ENCODE measurements at regions of chr2 and their contacts with region 1.

Region 1: DNA sequence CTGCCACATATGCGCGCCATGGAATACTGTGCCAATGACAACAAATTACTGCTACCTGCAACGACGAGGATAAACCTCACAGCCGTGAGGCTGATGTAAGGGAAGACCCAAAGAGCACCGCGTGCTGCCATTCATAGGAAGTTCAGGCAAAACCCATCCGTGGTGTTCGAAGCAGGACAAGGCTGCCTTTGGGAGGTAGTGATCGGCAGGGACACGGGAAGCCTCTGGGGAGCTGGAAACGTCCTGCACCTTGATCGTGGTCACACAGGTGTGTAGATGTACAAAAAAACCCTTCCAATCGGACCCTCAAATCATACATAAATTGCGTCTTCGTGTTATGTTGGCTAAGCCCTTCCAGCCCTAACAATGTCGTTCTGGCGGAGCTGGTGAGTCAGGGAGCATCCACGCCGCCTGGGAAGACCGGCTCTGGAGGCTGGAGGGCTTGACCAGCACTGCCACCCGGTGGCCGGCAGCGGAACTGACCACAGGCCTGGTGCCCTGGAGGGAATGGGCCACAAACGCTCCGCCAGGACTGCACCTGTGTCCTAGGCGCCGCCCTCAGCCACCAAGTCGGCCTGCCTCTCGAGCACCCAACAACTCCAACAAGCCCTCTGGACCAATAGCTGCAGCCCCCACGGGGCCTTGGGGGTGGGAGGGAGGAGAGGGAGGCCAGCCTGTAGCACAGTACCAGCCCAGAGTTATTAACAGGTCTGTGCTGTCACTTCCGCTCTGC is 4.1 kb upstream of the NEURL3 start:
- DNase-seq: peak; percentile 73
- ATAC-seq: peak; percentile 67
- H3K4me3 Mint-ChIP-seq: peak overlapping the region; percentile 65
- H3K27ac Mint-ChIP-seq: no peak overlapping the region
- H3K4me1 Mint-ChIP-seq: peaks cover 25% of the 10 kb centered on the region
- H3K27me3 Mint-ChIP-seq: peaks cover 7% of the 10 kb centered on the region
- CTCF ChIP-seq: peak; percentile 23

Region 2: DNA sequence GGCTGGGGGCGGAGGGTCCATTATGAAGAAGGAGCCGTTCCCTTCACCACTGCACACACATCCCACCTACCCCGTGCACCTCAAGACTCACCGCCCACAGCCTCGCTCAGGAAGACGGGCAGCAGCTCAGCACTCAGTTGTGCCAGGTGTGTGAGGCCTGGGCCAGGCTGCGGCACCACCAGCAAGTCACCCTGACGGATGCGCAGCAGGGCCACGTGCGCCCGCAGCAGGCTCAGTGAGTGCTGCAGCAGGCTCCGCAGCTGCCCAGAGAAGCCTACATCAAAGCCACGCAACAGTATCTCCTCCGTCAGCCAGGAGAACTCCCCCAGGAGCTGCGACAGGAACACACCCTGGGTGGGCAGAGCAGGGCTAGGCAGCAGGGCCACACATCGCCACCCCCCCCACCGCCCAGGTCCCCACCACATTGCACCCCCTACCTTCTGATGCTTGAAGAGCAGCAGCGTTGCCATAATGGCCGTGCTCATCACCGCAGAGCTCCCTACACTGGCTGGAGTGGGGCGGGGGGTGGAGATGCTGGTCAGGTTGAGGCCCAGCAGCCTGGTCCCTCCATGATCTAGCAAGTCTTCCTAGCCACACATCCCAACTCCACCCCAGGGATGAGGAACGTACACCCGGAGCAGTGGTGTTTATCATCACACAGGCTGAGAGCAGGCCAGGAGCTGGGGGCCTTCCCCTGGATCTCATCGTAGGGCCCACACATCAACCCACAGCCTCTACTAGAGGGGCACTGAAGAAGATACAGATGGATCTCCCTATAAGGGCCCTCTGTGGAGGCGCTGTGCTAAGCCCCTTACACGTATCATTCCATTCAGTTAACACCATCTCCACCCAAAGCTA is 484.7 kb before region 1 on chr2:
- CTCF ChIA-PET with region 1: interaction called, 5 read pairs
- POLR2A ChIA-PET with region 1: no interaction called
- intact Hi-C with region 1: loop called (anchors 10 kb)
- DNase-seq: no peak
- ATAC-seq: no peak
- H3K4me3 Mint-ChIP-seq: no peak overlapping the region
- H3K27ac Mint-ChIP-seq: no peak overlapping the region
- H3K4me1 Mint-ChIP-seq: no peaks in the 10 kb centered on the region
- H3K27me3 Mint-ChIP-seq: no peaks in the 10 kb centered on the region
- CTCF ChIP-seq: no peak

Region 3: GRCh38 chr2:96336104-96336775 is 173.0 kb before region 1 on chr2:
- CTCF ChIA-PET with region 1: no interaction called
- POLR2A ChIA-PET with region 1: interaction called, 3 read pairs
- intact Hi-C with region 1: loop called (anchors 1 kb)
- DNase-seq: no peak
- ATAC-seq: no peak
- H3K4me3 Mint-ChIP-seq: peak overlapping the region; percentile 87
- H3K27ac Mint-ChIP-seq: peak overlapping the region; percentile 91
- H3K4me1 Mint-ChIP-seq: peaks cover 36% of the 10 kb centered on the region
- H3K27me3 Mint-ChIP-seq: no peaks in the 10 kb centered on the region
- CTCF ChIP-seq: no peak

Region 4: GRCh38 chr2:96407041-96407918 is 102.0 kb before region 1 on chr2:
- CTCF ChIA-PET with region 1: interaction called, 78 read pairs
- POLR2A ChIA-PET with region 1: interaction called, 7 read pairs
- intact Hi-C with region 1: loop called (anchors 1 kb)
- DNase-seq: peak; percentile 48
- ATAC-seq: peak; percentile 85
- H3K4me3 Mint-ChIP-seq: no peak overlapping the region
- H3K27ac Mint-ChIP-seq: no peak overlapping the region
- H3K4me1 Mint-ChIP-seq: peaks cover 7% of the 10 kb centered on the region
- H3K27me3 Mint-ChIP-seq: no peaks in the 10 kb centered on the region
- CTCF ChIP-seq: no peak

Region 5: DNA sequence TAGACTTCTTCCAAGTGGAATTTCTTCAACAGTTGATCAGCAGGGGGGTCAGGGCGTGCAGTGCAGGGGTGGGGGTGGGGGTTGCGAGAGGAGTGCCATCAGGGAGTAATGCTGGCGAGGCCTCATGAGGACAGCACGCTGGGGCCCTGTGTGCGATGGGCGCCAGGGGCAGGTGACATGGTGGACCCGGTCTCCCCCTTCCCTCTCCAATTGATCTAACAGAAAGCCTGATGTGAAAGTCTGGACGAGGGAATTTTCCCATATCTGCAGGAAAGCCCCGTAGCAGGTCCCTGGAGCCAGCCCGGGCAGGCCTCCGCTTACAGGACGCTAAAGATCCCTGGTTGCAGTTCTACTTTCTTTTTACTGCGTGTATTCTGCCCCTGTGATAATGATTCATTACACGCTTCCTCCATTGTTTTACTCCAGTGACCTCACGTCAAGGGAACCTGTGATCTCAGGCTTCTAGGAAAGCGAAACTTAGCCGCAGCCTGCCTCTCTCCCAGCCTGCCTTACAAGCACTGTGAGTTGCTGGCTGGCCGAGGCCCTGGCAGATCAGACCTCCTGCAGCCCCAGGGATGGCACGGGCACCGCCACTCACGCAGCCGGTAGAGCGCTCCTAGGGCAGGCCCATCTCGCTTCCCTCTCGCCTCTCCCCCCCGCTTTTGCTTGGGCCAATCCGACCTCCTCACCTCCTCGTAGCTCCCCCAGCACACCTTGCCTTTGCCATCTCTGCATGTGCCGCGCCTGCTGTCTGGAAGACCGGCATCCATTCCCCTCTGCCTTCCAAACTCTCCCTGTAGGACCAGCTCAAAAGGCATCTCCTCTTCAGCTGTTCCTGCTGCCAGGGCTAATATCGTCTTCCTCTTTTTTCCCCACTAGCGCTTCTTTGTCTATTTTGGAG is 23.3 kb before region 1 on chr2:
- CTCF ChIA-PET with region 1: interaction called, 5 read pairs
- POLR2A ChIA-PET with region 1: no interaction called
- intact Hi-C with region 1: loop called (anchors 1 kb)
- DNase-seq: peak; percentile 54
- ATAC-seq: peak; percentile 91
- H3K4me3 Mint-ChIP-seq: peak overlapping the region; percentile 91
- H3K27ac Mint-ChIP-seq: peak overlapping the region; percentile 96
- H3K4me1 Mint-ChIP-seq: peaks cover 24% of the 10 kb centered on the region
- H3K27me3 Mint-ChIP-seq: peaks cover 2% of the 10 kb centered on the region
- CTCF ChIP-seq: no peak

Region 6: GRCh38 chr2:96536445-96537065 is 27.3 kb after region 1 on chr2 and contains the start of gene ARID5A:
- CTCF ChIA-PET with region 1: interaction called, 10 read pairs
- POLR2A ChIA-PET with region 1: interaction called, 4 read pairs
- intact Hi-C with region 1: loop called (anchors 2 kb)
- DNase-seq: peak; percentile 79
- ATAC-seq: peak; percentile 74
- H3K4me3 Mint-ChIP-seq: peak within 1 kb of the TSS; percentile 91
- H3K27ac Mint-ChIP-seq: peak within 1 kb of the TSS; percentile 90
- H3K4me1 Mint-ChIP-seq: peaks cover 53% of the 10 kb centered on the region
- H3K27me3 Mint-ChIP-seq: no peaks in the 10 kb centered on the region
- CTCF ChIP-seq: no peak
- total RNA-seq, gene ARID5A: 73.4 and 83.5 TPM in 2 replicates

Region 7: DNA sequence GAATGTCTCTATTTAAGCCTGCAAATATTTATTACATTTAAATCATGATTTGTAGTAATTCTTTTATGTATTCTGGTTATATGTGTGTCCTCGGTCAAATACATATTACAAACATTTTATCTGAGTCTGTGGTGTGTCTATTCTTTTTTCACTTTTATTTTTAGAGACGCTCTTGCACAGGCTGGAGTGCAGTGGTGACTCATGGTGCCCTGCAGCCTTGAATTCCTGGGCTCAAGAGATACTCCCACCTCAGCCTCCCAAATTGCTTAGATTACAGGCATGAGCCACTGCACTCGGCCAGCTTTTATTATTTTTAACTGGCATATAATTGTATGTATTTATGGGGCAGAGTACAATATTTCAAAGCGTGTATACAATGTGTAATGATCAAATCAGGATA is 74.7 kb after region 1 on chr2:
- CTCF ChIA-PET with region 1: no interaction called
- POLR2A ChIA-PET with region 1: no interaction called
- intact Hi-C with region 1: no loop called
- DNase-seq: no peak
- ATAC-seq: no peak
- H3K4me3 Mint-ChIP-seq: no peak overlapping the region
- H3K27ac Mint-ChIP-seq: no peak overlapping the region
- H3K4me1 Mint-ChIP-seq: no peaks in the 10 kb centered on the region
- H3K27me3 Mint-ChIP-seq: no peaks in the 10 kb centered on the region
- CTCF ChIP-seq: no peak